Activated T-helper 1 cell treated with anti-CD3 and anti-CD28 coated beads, Interleukin-12 subunit alpha, Interleukin-12 subunit beta, Interleukin-2, Interleukin-4 antibody, amounts not matched to agents 30 ng/mL and 10 ng/mL and 1 ng/mL, durations not matched to agents 14 hours and 24 hours and 36 hours (primary cell): ENCODE measurements at regions of chr17 and their contacts with region 1.

Region 1: GRCh38 chr17:21043286-21044232 is 748 bp upstream of the USP22 start:
- DNase-seq: peak; percentile 95
- H3K4me3 Mint-ChIP-seq: peak overlapping the region; percentile 75
- H3K27ac Mint-ChIP-seq: peak overlapping the region; percentile 88
- H3K4me1 Mint-ChIP-seq: peaks cover 15% of the 10 kb centered on the region
- H3K27me3 Mint-ChIP-seq: no peaks in the 10 kb centered on the region

Region 2: GRCh38 chr17:20992987-20993862 is 50.3 kb before region 1 on chr17:
- intact Hi-C with region 1: loop called (anchors 5 kb)
- DNase-seq: peak; percentile 44
- H3K4me3 Mint-ChIP-seq: no peak overlapping the region
- H3K27ac Mint-ChIP-seq: no peak overlapping the region
- H3K4me1 Mint-ChIP-seq: peaks cover 7% of the 10 kb centered on the region
- H3K27me3 Mint-ChIP-seq: no peaks in the 10 kb centered on the region

Region 3: DNA sequence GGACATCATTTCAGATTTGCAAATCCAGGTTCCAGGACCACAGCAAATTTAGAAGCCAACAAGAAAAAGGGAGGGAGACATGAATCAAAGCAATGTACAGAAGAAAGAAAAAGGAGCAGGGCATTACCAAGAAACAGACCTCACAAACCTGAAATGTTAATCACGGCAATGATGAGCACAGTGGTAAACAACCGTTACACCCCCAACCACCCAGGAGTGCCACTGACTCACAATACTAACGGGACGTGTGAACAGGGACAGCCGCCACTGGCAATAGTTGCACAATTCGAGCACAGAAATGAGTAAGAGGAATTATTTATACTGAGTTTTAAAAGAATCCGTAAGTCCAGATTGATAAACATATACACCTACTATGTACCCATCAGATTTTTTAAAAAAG is 14.5 kb before region 1 on chr17:
- intact Hi-C with region 1: loop called (anchors 1 kb)
- DNase-seq: no peak
- H3K4me3 Mint-ChIP-seq: no peak overlapping the region
- H3K27ac Mint-ChIP-seq: peak overlapping the region; percentile 62
- H3K4me1 Mint-ChIP-seq: peaks cover 66% of the 10 kb centered on the region
- H3K27me3 Mint-ChIP-seq: no peaks in the 10 kb centered on the region

Region 4: GRCh38 chr17:21126645-21127510 is 83.3 kb after region 1 on chr17 and contains the start of gene DHRS7B:
- intact Hi-C with region 1: loop called (anchors 1 kb)
- DNase-seq: peak; percentile 96
- H3K4me3 Mint-ChIP-seq: peak within 1 kb of the TSS; percentile 95
- H3K27ac Mint-ChIP-seq: peak within 1 kb of the TSS; percentile 95
- H3K4me1 Mint-ChIP-seq: peaks cover 44% of the 10 kb centered on the region
- H3K27me3 Mint-ChIP-seq: peaks cover 3% of the 10 kb centered on the region
- total RNA-seq, gene DHRS7B: 20.0 and 23.6 TPM in 2 replicates

Region 5: DNA sequence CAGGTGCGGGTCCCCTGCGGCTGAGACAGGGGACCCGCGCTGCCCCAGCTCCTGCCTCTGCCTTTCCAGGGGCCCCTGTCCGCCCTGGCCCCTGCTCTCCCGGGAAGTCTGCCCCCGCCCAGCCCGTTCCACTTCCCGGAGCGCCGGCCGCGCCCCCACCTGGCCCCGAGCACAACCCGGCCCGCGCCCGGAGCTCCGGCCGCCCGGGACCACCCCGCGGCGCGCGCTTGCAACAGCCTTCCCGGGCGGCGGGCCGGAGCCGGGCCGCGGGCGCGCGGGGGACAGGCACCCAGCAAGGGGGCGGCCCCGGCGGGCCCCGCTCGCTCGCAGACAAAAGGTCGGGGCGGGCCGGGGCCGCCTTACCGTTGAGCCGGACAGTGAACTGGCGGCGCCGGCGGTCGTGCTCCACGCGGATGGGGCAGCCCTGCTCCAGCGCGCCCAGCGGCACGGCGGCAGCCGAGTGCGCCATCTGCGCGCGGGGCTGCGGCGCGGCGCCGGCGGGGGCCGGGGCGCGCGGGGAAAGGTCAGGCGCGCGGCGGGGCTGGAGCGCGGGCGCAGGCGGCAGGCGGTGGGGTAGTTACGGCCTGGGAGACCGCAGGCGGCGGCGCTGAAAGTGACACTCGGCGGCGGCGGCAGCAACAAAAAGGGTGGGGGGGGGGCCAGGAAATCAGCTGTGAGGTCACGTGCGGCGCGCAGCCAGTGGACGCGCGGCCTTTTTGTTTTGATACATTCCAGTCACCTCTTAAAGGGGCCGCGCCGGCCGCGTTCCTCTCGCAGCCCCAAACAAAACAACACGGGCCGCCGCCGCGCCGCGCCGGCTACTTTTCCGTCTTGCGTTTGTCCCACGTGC is 209.5 kb after region 1 on chr17 and contains the start of gene NATD1:
- intact Hi-C with region 1: loop called (anchors 1 kb)
- DNase-seq: peak; percentile 70
- H3K4me3 Mint-ChIP-seq: peak within 1 kb of the TSS; percentile 83
- H3K27ac Mint-ChIP-seq: peak within 1 kb of the TSS; percentile 23
- H3K4me1 Mint-ChIP-seq: peaks cover 7% of the 10 kb centered on the region
- H3K27me3 Mint-ChIP-seq: peaks cover 13% of the 10 kb centered on the region
- total RNA-seq, gene NATD1: 1.6 and 1.7 TPM in 2 replicates

Region 6: DNA sequence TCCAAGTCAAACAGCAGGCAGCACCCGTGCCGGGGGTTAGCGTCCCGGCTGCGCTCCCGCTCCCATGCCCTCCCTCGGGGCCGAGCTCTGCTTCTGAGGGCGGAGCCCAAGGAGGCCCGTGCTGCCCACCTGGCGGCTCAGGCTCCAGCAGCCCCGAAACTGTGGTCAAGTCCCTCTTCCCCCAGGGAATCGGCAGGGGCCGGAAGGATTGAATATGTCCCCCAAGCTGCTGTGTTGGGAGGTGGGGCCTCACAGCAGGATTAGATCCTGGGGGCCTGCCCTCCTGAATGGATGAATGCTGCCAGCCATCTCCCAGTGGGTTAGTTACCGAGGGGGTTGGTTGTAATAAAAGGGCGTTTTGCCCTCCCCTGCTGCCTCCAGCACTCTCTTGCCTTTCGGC is 274.9 kb after region 1 on chr17:
- intact Hi-C with region 1: loop called (anchors 5 kb)
- DNase-seq: no peak
- H3K4me3 Mint-ChIP-seq: no peak overlapping the region
- H3K27ac Mint-ChIP-seq: no peak overlapping the region
- H3K4me1 Mint-ChIP-seq: no peaks in the 10 kb centered on the region
- H3K27me3 Mint-ChIP-seq: peaks cover 3% of the 10 kb centered on the region